Natural killer cell (primary cell): ENCODE measurements at regions of chr6 and their contacts with region 1.

Region 1: GRCh38 chr6:106097411-106098231 is 11.5 kb downstream of the PRDM1 start:
- DNase-seq: peak; percentile 48 to 91
- ATAC-seq: peak; percentile 46 to 73 (median 70)
- H3K4me3 ChIP-seq: peak overlapping the region; percentile 80
- H3K4me3 Mint-ChIP-seq: peak overlapping the region; percentile 98
- H3K27ac ChIP-seq: peak overlapping the region; percentile 85
- H3K27ac Mint-ChIP-seq: peak overlapping the region; percentile 98 to 99
- H3K4me1 ChIP-seq: peaks cover 12% of the 10 kb centered on the region
- H3K4me1 Mint-ChIP-seq: peaks cover 82 to 89% of the 10 kb centered on the region in 2 donors
- H3K27me3 ChIP-seq: no peaks in the 10 kb centered on the region
- H3K27me3 Mint-ChIP-seq: no peaks in the 10 kb centered on the region
- CTCF ChIP-seq: no peak

Region 2: DNA sequence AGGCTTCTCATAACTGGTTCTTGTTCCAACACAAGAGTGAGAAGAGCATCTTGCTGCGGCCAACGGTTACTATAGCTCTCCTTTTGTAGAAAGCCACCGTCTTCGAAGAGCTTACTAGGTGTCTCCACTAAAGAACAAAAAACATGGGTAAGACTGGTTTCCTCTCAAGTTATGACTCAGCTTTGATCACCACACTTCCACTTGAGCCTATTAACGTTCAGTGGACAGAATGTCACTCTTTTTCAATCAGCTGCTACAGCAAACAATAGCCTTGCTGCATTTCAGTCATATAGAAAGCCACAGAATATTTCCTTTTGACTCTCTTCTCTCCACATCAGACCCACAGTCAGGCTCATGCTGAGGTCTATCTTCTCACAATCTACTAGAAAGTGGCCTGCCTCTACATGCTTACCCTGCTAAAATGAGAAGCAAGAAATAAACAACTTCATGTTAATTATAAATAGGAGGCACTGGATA is 451.2 kb before region 1 on chr6:
- intact Hi-C with region 1: loop called (anchors 1 kb)
- DNase-seq: peak in 1 of 2 donors; percentile 77
- ATAC-seq: peak; percentile 79 to 87 (median 83)
- H3K4me3 ChIP-seq: no peak overlapping the region
- H3K4me3 Mint-ChIP-seq: peak overlapping the region; percentile 54
- H3K27ac ChIP-seq: peak overlapping the region; percentile 77
- H3K27ac Mint-ChIP-seq: peak overlapping the region; percentile 88 to 95
- H3K4me1 ChIP-seq: peaks cover 46% of the 10 kb centered on the region
- H3K4me1 Mint-ChIP-seq: peaks cover 66 to 75% of the 10 kb centered on the region in 2 donors
- H3K27me3 ChIP-seq: no peaks in the 10 kb centered on the region
- H3K27me3 Mint-ChIP-seq: no peaks in the 10 kb centered on the region
- CTCF ChIP-seq: no peak

Region 3: GRCh38 chr6:105692626-105693215 is 404.9 kb before region 1 on chr6:
- intact Hi-C with region 1: no loop called
- DNase-seq: no peak
- ATAC-seq: no peak
- H3K4me3 ChIP-seq: no peak overlapping the region
- H3K4me3 Mint-ChIP-seq: no peak overlapping the region
- H3K27ac ChIP-seq: no peak overlapping the region
- H3K27ac Mint-ChIP-seq: no peak overlapping the region
- H3K4me1 ChIP-seq: no peaks in the 10 kb centered on the region
- H3K4me1 Mint-ChIP-seq: no peaks in the 10 kb centered on the region
- H3K27me3 ChIP-seq: peaks cover 4% of the 10 kb centered on the region
- H3K27me3 Mint-ChIP-seq: peaks cover 12 to 22% of the 10 kb centered on the region in 2 donors
- CTCF ChIP-seq: no peak

Region 4: GRCh38 chr6:106085984-106086813 is 11.4 kb before region 1 on chr6 and contains the start of gene PRDM1:
- intact Hi-C with region 1: loop called (anchors 1 kb)
- DNase-seq: peak; percentile 75 to 93
- ATAC-seq: peak; percentile 90 to 97 (median 93)
- H3K4me3 ChIP-seq: peak within 1 kb of the TSS; percentile 54
- H3K4me3 Mint-ChIP-seq: peak within 1 kb of the TSS; percentile 94
- H3K27ac ChIP-seq: peak within 1 kb of the TSS; percentile 47
- H3K27ac Mint-ChIP-seq: peak within 1 kb of the TSS; percentile 88 to 97
- H3K4me1 ChIP-seq: peaks cover 32% of the 10 kb centered on the region
- H3K4me1 Mint-ChIP-seq: peaks cover 72 to 74% of the 10 kb centered on the region in 2 donors
- H3K27me3 ChIP-seq: no peaks in the 10 kb centered on the region
- H3K27me3 Mint-ChIP-seq: no peaks in the 10 kb centered on the region
- CTCF ChIP-seq: peak; percentile 15
- total RNA-seq, gene PRDM1: 165 to 180 (median 177) TPM

Region 5: GRCh38 chr6:106141441-106142237 is 44.0 kb after region 1 on chr6:
- intact Hi-C with region 1: loop called (anchors 1 kb)
- DNase-seq: peak; percentile 38 to 56
- ATAC-seq: peak; percentile 71 to 84 (median 78)
- H3K4me3 ChIP-seq: no peak overlapping the region
- H3K4me3 Mint-ChIP-seq: peak overlapping the region; percentile 88
- H3K27ac ChIP-seq: peak overlapping the region; percentile 77
- H3K27ac Mint-ChIP-seq: peak overlapping the region; percentile 92 to 96
- H3K4me1 ChIP-seq: peaks cover 55% of the 10 kb centered on the region
- H3K4me1 Mint-ChIP-seq: peaks cover 59 to 72% of the 10 kb centered on the region in 2 donors
- H3K27me3 ChIP-seq: no peaks in the 10 kb centered on the region
- H3K27me3 Mint-ChIP-seq: no peaks in the 10 kb centered on the region
- CTCF ChIP-seq: no peak

Region 6: GRCh38 chr6:106194949-106195921 is 97.6 kb after region 1 on chr6:
- intact Hi-C with region 1: loop called (anchors 1 kb)
- DNase-seq: peak in 1 of 2 donors; percentile 76
- ATAC-seq: peak; percentile 72 to 82 (median 73)
- H3K4me3 ChIP-seq: peak overlapping the region; percentile 24
- H3K4me3 Mint-ChIP-seq: peak overlapping the region; percentile 81
- H3K27ac ChIP-seq: peak overlapping the region; percentile 94
- H3K27ac Mint-ChIP-seq: peak overlapping the region; percentile 92 to 95
- H3K4me1 ChIP-seq: peaks cover 20% of the 10 kb centered on the region
- H3K4me1 Mint-ChIP-seq: peaks cover 50 to 53% of the 10 kb centered on the region in 2 donors
- H3K27me3 ChIP-seq: no peaks in the 10 kb centered on the region
- H3K27me3 Mint-ChIP-seq: no peaks in the 10 kb centered on the region
- CTCF ChIP-seq: no peak

Region 7: GRCh38 chr6:106206905-106207304 is 109.3 kb after region 1 on chr6:
- intact Hi-C with region 1: no loop called
- DNase-seq: no peak
- ATAC-seq: no peak
- H3K4me3 ChIP-seq: no peak overlapping the region
- H3K4me3 Mint-ChIP-seq: no peak overlapping the region
- H3K27ac ChIP-seq: no peak overlapping the region
- H3K27ac Mint-ChIP-seq: no peak overlapping the region
- H3K4me1 ChIP-seq: no peaks in the 10 kb centered on the region
- H3K4me1 Mint-ChIP-seq: peaks cover 19 to 21% of the 10 kb centered on the region in 2 donors
- H3K27me3 ChIP-seq: no peaks in the 10 kb centered on the region
- H3K27me3 Mint-ChIP-seq: no peaks in the 10 kb centered on the region
- CTCF ChIP-seq: no peak

Region 8: DNA sequence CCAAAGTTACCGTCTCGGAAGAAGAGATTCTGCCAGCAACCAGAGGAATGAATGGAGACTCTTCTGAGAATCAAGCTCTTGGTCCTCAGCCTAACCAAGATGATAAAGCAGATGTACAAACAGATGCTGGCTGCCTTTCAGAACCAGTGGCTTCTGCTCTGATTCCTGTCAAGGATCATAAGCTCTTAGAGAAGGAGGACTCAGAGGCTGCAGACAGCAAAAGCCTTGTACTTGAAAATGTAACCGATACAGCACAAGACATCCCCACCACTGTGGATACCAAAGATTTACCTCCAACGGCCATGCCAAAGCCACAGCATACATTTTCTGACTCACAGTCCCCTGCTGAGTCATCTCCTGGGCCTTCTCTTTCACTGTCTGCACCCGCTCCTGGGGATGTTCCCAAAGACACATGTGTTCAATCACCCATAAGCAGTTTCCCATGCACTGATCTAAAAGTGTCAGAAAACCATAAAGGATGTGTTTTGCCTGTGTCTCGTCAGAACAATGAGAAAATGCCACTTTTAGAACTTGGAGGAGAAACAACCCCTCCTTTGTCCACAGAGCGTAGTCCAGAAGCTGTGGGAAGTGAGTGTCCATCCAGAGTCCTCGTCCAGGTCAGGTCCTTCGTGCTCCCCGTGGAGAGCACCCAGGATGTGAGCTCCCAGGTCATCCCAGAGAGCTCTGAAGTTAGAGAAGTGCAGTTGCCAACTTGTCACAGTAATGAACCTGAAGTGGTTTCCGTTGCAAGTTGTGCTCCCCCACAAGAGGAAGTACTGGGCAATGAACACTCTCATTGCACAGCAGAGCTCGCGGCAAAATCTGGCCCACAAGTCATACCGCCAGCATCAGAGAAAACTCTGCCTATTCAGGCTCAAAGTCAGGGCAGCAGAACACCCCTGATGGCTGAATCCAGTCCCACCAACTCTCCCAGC is 422.1 kb after region 1 on chr6:
- intact Hi-C with region 1: loop called (anchors 2 kb)
- DNase-seq: peak; percentile 66 to 90
- ATAC-seq: peak; percentile 52 to 78 (median 72)
- H3K4me3 ChIP-seq: peak overlapping the region; percentile 56
- H3K4me3 Mint-ChIP-seq: peak overlapping the region; percentile 94
- H3K27ac ChIP-seq: peak overlapping the region; percentile 93
- H3K27ac Mint-ChIP-seq: peak overlapping the region; percentile 91 to 95
- H3K4me1 ChIP-seq: peaks cover 58% of the 10 kb centered on the region
- H3K4me1 Mint-ChIP-seq: peaks cover 51 to 76% of the 10 kb centered on the region in 2 donors
- H3K27me3 ChIP-seq: no peaks in the 10 kb centered on the region
- H3K27me3 Mint-ChIP-seq: no peaks in the 10 kb centered on the region
- CTCF ChIP-seq: no peak